Heart right ventricle (tissue), 16 donors: ENCODE measurements at regions of chr14 and their contacts with region 1.

Region 1: DNA sequence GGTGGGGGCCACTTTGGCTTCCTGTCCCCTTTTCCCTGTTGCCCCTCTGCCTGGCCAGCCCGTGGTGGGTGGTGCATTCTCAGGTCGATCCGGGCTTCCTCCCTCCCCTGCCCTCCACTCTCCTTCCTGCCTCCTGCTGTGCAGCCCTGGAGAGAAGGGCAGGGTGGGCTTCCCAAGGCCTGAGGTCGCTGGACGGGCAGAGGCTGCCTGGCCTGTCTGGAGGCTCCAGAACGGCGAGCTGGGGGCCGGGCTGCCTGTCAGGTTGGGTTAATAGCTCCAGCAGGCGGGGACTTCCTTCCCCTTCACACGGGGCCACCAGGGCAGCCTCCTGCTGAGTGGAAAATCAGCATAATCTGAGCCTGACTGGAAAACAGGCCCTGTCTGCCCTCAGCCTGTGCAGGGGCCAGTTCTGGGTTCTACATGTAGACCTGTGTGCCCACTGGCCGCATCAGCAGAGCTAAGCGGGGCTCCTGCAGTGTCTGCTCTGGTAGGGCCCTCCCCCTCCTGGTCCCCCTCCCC is 11.3 kb downstream of the KIF26A start:
- DNase-seq: peak; percentile 48 to 62
- ATAC-seq: peak; percentile 18 to 82 (median 60)
- H3K4me3 ChIP-seq: peak overlapping the region in 5 of 10 donors; percentile 10 to 32 (median 17)
- H3K27ac ChIP-seq: peak overlapping the region in 6 of 10 donors; percentile 11 to 65 (median 45)
- H3K4me1 ChIP-seq: peaks cover 6 to 74% (median 33%) of the 10 kb centered on the region in 9 donors
- H3K27me3 ChIP-seq: no peaks in the 10 kb centered on the region
- CTCF ChIP-seq: no peak

Region 2: DNA sequence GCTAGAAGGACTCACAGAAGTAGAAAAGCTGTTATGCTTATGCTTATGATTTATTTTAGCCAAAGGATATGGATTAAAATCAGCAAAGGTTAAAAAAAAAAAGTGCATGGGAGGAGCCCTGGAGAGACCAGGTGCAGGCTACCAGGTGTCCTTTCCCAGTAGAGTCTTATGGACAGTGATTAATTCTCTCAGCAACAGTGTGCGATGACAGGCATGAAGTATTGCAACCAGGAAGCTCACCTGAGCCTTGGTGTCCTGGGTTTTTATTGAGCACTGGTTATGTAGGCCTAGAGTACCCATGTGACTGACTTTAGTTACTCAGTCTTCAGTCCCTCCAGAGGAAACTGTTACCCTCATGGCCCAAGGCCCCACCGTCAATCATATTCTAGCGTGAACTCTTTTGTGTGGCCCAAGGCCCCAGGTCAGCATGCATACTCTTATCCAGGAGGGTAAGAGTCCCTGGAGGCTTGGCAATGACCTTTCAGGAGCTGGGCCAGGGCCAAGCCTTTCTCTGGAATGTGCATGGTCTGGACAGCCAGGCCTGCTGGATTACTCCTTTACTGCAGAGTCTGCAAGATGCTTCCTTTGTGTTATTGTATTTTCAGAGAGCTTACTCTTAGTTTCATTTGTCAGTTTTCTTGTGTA is 137.7 kb before region 1 on chr14:
- intact Hi-C with region 1: no loop called
- DNase-seq: peak in 1 of 2 donors; percentile 56
- ATAC-seq: peak in 4 of 8 donors; percentile 62 to 84 (median 74)
- H3K4me3 ChIP-seq: no peak overlapping the region
- H3K27ac ChIP-seq: no peak overlapping the region
- H3K4me1 ChIP-seq: peaks cover 0 to 7% (median 0%) of the 10 kb centered on the region in 9 donors
- H3K27me3 ChIP-seq: no peaks in the 10 kb centered on the region
- CTCF ChIP-seq: no peak

Region 3: DNA sequence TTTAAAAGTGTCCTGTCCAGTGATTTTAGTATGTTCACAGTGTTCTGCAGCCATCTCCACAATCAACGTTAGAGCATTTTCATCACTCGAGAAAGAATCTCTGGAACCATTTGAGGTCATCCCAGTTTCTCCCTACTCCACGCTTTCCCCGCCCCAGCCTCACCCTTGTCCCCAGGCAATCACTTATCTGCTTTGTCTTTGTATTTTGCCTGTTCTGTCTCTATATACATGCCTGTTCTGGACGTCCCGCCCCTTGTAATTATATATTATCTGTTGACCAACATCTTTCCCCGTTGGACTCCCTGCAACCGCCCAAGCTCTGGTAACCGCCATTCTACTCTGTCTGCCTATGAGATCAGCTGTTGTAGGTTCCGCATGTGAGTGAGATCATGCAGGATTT is 85.7 kb before region 1 on chr14:
- intact Hi-C with region 1: no loop called
- DNase-seq: no peak
- ATAC-seq: no peak
- H3K4me3 ChIP-seq: no peak overlapping the region
- H3K27ac ChIP-seq: no peak overlapping the region
- H3K4me1 ChIP-seq: no peaks in the 10 kb centered on the region
- H3K27me3 ChIP-seq: peaks cover 0 to 27% (median 4%) of the 10 kb centered on the region in 7 donors
- CTCF ChIP-seq: no peak

Region 4: DNA sequence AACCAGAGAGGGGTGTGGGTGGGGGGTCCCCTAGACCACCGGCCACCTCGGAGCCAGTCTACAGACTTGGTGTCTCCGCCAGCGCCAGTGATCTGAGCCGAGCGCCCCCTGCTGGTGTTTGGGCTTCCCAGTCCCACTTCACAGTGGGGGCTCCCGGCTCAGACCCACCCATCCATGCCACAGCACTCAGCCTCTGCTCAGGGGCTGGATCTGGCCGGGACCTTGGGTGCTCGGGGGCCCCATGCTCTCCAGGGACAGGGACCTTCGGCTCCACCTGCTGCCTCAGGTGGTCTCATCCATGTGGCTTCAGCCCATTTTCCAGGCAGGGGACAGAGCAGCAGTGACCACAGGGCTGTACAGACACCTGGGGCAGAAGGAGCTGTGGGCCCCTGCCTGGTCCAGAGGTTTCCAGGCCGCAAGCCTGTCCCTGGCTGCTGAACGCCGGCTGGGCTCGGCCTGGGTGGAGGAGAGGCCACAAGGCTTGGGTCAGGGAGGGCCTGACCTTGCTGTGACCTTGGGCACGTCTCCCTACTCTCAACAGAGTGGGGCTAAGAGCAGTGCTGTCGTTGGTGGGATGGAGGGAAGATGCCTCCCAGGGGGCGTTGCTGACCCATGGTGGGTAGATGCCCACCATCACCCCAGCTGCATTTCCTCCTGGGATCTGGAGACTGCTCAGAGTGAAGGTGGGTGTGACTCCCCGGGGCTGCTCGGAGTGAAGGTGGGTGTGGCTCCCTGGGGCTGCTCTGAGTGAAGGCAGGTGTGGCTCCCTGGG is 75.0 kb after region 1 on chr14:
- intact Hi-C with region 1: loop called in 2 of 10 experiments (anchors 5 kb)
- DNase-seq: peak in 1 of 2 donors; percentile 59
- ATAC-seq: peak in 4 of 8 donors; percentile 28 to 62 (median 46)
- H3K4me3 ChIP-seq: peak overlapping the region in 3 of 10 donors; percentile 29 to 43 (median 33)
- H3K27ac ChIP-seq: no peak overlapping the region
- H3K4me1 ChIP-seq: peaks cover 0 to 35% (median 11%) of the 10 kb centered on the region in 9 donors
- H3K27me3 ChIP-seq: peaks cover 0 to 51% (median 25%) of the 10 kb centered on the region in 7 donors
- CTCF ChIP-seq: peak; percentile 31 to 73 (median 56)